H1 (cell line): ENCODE measurements at regions of chr9 and their contacts with region 1.

Region 1: DNA sequence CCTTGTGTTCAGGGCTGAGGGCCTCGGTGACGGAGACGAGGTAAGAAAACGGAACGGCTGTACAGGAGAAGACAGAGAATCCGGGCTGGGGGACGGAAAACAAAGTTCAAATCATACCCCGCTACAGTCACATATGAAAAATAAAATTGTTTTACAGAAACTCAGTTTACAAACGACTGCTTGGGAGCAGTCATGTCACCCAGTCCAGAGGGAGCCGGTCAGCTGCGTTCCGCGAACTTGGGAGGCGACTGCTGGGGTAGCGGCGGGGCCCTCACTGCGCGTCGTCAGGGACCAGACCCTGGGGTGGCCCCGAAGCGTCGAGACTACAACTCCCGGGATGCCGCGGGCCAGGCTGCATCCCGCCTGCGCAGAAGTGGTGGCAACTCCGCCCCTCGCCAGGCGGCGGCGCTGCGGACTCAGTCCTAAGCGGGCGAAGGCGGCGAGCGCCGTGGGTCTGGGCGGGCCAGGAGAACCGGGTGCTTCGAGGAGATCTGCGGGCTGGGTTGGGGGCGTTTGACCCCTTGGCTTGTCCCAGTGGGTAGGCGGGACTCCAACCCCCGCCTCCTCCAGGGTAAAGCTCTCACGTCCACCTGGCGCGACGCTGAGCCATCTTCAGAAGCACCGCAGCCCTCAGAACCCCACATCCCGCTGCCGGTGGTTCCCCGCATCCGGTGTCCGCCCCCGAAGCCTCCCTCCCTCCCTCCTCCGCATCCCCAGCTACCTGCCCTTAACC is 4.0 kb downstream of the SIT1 start:
- DNase-seq: peak in 1 of 2 experiments; percentile 98
- H3K4me3 ChIP-seq: peak overlapping the region; percentile 56 to 79 (median 60)
- H3K27ac ChIP-seq: no peak overlapping the region
- H3K4me1 ChIP-seq: peaks cover 0 to 17% (median 12%) of the 10 kb centered on the region in 4 experiments; a peak in 5 of 7 replicates
- H3K27me3 ChIP-seq: no peaks in the 10 kb centered on the region
- CTCF ChIP-seq: peak; percentile 89 to 98 (median 93)
- EP300 ChIP-seq: no peak
- POLR2A ChIP-seq: peak in 1 of 2 experiments; percentile 66; a peak in 1 of 3 replicates
- RAD21 ChIP-seq: peak; percentile 77 to 84

Region 2: DNA sequence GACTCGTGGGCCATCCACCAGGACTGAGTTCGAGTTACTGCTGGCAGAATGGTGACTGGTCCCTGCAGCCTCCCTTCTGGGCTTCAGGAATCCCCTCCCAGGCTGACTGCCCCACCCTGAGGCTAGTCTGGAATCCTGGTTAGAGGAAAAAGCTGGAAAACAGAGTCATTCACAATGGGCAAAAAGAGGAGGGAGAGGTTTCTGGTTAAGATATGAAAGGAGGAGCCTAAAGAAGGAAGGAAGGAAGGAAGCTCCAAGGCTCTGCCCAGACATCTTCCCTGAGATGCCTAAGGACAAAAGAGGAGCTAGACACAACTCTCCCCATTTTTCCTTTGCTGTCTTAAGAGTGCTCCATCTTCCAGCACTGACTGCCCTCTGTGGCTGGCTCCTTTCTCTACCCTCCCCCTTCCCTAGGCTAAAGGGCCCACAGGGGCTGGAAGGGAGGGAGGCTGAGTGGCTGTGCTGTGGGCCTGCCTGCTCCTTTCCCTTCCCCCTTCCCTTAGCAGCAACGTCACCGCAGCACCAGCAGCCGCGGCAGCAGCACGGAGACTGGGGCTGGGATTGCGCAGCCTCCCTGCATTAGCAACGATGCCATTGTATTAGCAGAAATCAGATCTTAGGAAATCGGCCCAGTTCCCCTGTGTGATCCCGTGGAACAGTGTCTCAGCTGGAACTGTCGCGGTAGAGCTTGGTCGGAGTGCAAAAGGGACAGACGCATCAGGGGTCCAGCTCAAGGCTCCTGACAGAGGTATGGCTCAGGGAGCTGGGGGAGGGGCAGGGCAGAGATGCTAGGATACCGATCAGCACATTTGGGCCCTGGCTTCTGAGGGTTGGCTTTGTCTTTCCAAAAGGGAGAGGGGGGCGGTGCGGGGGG is 108.1 kb before region 1 on chr9:
- CTCF ChIA-PET with region 1: no interaction called
- POLR2A ChIA-PET with region 1: no interaction called
- DNase-seq: peak in 1 of 2 experiments; percentile 73
- H3K4me3 ChIP-seq: peak overlapping the region; percentile 37 to 62 (median 46); a peak in 7 of 8 replicates
- H3K27ac ChIP-seq: no peak overlapping the region; the same call in 1 of the 2 replicates
- H3K4me1 ChIP-seq: peaks cover 10 to 22% (median 13%) of the 10 kb centered on the region in 4 experiments
- H3K27me3 ChIP-seq: no peaks in the 10 kb centered on the region
- CTCF ChIP-seq: no peak
- EP300 ChIP-seq: no peak
- POLR2A ChIP-seq: peak in 1 of 2 experiments; percentile 66; a peak in 2 of 3 replicates
- RAD21 ChIP-seq: 0 out of 4 replicates have a peak, but pooled peaks of 1 of the 2 experiments have one; percentile 2

Region 3: GRCh38 chr9:35611230-35611797 is 35.4 kb before region 1 on chr9:
- CTCF ChIA-PET with region 1: interaction called, 47 read pairs
- POLR2A ChIA-PET with region 1: interaction called, 7 read pairs
- DNase-seq: peak in 1 of 2 experiments; percentile 55
- H3K4me3 ChIP-seq: no peak overlapping the region
- H3K27ac ChIP-seq: no peak overlapping the region
- H3K4me1 ChIP-seq: peaks cover 0 to 5% (median 3%) of the 10 kb centered on the region in 4 experiments; a peak in 4 of 7 replicates
- H3K27me3 ChIP-seq: peaks cover 0 to 7% (median 5%) of the 10 kb centered on the region in 4 experiments; a peak in 4 of 7 replicates
- CTCF ChIP-seq: peak; percentile 63 to 87 (median 87)
- EP300 ChIP-seq: no peak
- POLR2A ChIP-seq: no peak
- RAD21 ChIP-seq: peak; percentile 41 to 58

Region 4: GRCh38 chr9:35628389-35628991 is 18.2 kb before region 1 on chr9:
- CTCF ChIA-PET with region 1: interaction called, 27 read pairs
- POLR2A ChIA-PET with region 1: interaction called, 5 read pairs
- DNase-seq: no peak
- H3K4me3 ChIP-seq: no peak overlapping the region
- H3K27ac ChIP-seq: no peak overlapping the region
- H3K4me1 ChIP-seq: no peaks in the 10 kb centered on the region
- H3K27me3 ChIP-seq: no peaks in the 10 kb centered on the region
- CTCF ChIP-seq: no peak
- EP300 ChIP-seq: no peak
- POLR2A ChIP-seq: no peak
- RAD21 ChIP-seq: no peak

Region 5: DNA sequence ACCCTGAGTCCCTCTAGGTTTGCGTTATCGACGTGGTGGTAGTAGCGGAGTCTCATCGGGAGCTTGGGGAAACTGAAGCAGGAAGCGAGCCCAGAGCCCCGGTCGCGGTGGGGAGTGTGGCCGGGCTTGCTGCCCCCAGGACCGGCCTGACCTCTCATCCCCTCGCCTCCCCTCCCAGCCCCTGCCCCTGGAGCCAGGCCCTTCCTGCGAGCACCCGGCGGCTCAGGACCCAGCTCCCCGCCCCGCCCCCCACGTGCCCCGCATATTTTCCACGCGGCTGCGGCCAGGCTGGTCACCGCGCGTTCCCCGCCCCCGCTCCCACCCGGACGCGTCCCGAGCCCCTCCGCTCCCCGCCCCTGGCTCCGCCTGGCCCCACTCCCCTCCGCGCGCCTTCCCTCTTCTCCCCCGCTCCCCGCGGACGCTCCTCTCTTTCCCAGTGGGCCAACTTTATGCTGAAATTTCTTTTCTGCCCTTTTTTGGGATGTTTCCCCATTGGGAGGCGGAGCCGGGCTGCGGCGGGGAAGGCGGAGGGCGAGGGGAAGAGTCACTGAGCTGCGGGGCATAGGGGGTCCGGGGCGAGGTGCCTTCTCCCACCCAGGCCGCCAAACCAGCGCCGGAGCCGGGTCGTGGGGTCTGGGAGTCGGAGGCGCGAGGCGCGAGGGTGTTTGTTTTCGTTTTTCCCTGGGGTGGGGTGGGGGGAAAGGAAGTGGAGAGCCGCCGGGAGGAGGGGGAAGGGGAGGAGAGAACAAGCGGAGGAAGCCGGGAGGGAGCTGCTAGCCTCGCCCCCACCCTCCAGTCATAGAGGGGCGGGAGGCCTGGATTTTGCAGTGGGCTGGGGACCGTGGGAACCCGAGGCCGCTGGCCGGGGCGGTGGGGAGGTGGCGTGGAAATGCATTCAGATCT is 44.0 kb after region 1 on chr9:
- CTCF ChIA-PET with region 1: interaction called, 65 read pairs
- POLR2A ChIA-PET with region 1: interaction called, 29 read pairs
- DNase-seq: peak in 1 of 2 experiments; percentile 84
- H3K4me3 ChIP-seq: peak overlapping the region; percentile 72 to 99 (median 82)
- H3K27ac ChIP-seq: no peak overlapping the region
- H3K4me1 ChIP-seq: peaks cover 6 to 15% (median 8%) of the 10 kb centered on the region in 4 experiments; a peak in 6 of 7 replicates
- H3K27me3 ChIP-seq: no peaks in the 10 kb centered on the region
- CTCF ChIP-seq: no peak
- EP300 ChIP-seq: no peak
- POLR2A ChIP-seq: no peak
- RAD21 ChIP-seq: no peak

Region 6: DNA sequence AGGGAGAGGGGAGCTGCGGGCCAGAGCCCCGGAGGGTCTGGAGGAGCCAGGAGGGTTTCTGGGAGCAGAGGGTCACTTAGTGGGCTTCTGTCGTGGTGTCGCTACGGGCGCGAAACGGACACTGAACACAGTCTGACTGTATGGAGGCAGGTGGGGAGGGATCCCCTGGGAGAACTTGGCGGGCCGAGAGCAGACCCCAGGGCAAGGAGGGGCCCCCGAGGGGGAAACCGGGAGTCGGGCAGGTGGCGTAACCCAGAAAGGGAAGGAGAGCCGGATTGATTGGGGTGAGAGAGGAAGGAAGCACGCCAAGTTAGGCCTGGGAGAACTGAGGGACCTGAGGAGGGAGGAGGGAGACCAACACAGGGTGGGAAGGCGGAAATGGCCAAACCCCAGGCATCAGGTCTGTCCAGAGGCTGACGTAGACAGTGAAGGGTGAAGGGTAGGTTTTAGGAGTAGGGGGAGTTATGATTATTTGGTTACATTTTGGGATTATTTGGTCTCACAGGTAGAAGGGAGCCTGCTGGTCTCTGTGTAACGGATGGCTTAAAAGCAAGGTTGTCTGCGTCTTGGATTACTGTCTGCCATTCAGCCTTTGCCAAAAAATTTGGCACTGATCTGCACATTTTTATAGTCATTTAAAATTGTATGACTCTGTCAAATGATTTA is 110.7 kb after region 1 on chr9:
- CTCF ChIA-PET with region 1: no interaction called
- POLR2A ChIA-PET with region 1: no interaction called
- DNase-seq: peak in 1 of 2 experiments; percentile 84
- H3K4me3 ChIP-seq: peak overlapping the region; percentile 85 to 92 (median 90)
- H3K27ac ChIP-seq: peak overlapping the region; percentile 81
- H3K4me1 ChIP-seq: peaks cover 0 to 5% (median 0%) of the 10 kb centered on the region in 4 experiments; a peak in 2 of 7 replicates
- H3K27me3 ChIP-seq: no peaks in the 10 kb centered on the region
- CTCF ChIP-seq: no peak
- EP300 ChIP-seq: no peak; a peak in 1 of 3 replicates
- POLR2A ChIP-seq: peak; percentile 14 to 68
- RAD21 ChIP-seq: no peak